Activated T-helper 2 cell treated with anti-CD3 and anti-CD28 coated beads, Interferon-gamma antibody, Interleukin-2, Interleukin-4, amounts not matched to agents 10 μg/mL and 5 μg/mL and 100 μg/mL, durations not matched to agents 14 hours and 24 hours and 36 hours (primary cell): ENCODE measurements at regions of chr12 and their contacts with region 1.

Region 1: DNA sequence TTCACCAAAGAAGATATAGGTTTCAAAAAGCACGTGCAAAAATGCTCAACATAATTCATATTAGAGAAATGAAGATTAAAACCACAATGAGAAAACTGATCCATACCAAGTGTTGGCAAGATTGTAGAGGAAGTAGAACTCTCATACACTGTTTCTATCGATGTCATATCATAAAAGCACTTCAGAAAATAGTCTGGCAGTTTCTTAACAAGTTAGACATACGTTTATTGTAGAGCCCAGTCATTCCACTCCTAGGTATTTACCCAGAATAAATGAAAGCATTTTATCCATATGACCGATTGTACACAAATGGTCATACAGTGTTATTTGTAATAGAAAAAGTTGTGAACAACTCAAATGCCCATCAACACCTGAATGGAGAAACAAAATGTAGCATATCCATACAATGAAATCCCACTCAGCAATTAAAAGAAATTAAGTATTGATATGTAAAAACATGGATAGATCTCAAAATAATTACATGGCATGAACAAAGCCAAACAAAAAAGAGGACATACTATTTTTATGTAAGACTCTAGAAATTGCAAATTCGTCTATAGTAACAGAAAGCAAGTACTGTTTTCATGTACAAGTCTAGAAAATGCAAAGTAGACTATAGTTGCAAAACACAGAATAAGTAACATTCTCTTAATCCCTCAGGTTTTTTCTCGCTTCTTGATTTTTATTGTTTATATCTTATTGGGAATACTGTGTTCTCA is 41.0 kb downstream of the USP15 start:
- DNase-seq: no peak
- H3K4me3 Mint-ChIP-seq: no peak overlapping the region
- H3K27ac Mint-ChIP-seq: no peak overlapping the region
- H3K4me1 Mint-ChIP-seq: peaks cover 37% of the 10 kb centered on the region
- H3K27me3 Mint-ChIP-seq: no peaks in the 10 kb centered on the region

Region 2: DNA sequence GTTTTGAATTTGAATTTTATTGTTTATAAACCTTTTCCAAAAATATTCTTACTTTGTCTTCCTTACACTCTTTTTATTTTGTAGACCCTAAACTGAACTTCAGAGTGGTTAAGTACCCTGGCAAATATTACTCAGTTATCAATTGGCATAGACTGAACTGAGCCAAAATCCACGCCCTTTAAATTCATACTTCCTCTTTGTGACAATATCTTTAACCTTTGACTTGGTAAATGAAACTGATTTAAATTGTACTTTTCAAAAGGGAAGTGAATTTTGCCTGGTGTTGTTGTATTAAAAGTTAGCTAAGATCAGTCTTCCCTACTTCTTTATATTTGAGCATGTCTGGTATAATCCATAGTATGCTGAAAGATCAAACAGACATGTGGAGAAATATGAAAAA is 225.4 kb before region 1 on chr12:
- intact Hi-C with region 1: no loop called
- DNase-seq: no peak
- H3K4me3 Mint-ChIP-seq: no peak overlapping the region
- H3K27ac Mint-ChIP-seq: no peak overlapping the region
- H3K4me1 Mint-ChIP-seq: no peaks in the 10 kb centered on the region
- H3K27me3 Mint-ChIP-seq: peaks cover 2% of the 10 kb centered on the region

Region 3: GRCh38 chr12:62181481-62181880 is 119.8 kb before region 1 on chr12:
- intact Hi-C with region 1: no loop called
- DNase-seq: no peak
- H3K4me3 Mint-ChIP-seq: no peak overlapping the region
- H3K27ac Mint-ChIP-seq: no peak overlapping the region
- H3K4me1 Mint-ChIP-seq: no peaks in the 10 kb centered on the region
- H3K27me3 Mint-ChIP-seq: peaks cover 19% of the 10 kb centered on the region

Region 4: DNA sequence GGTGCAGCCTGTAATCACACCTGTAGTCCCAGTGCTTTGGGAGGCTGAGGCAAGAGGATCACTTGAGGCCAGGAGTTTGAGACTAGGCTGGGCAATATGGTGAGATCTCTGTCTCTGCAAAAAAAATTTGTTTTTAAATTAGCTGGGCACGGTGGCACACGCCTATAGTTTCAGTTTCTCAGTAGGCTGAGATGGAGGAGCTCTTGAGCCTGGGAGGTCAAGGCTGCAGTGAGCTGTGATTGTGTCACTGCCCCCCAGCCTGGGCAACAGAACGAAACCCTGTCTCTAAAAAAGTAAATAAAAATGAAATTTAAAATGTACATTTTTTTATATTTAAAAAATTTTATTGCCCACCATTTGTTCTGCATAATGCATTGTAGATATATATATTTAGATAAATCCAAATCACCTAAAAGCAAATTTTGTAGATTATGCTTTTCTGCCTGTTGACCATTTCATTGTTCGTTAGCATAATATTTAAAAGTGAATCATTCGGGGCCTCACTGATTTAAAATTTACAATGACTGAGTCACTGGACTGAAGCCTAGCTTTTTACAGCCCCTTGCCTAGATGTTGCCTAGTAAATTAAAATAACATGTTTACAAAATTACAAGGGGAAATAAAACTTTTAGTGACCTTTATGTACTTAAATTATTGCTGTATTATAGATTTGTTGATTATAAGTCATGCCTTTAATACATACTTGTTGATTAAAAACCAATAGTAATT is 46.8 kb after region 1 on chr12:
- intact Hi-C with region 1: loop called (anchors 5 kb)
- DNase-seq: no peak
- H3K4me3 Mint-ChIP-seq: no peak overlapping the region
- H3K27ac Mint-ChIP-seq: no peak overlapping the region
- H3K4me1 Mint-ChIP-seq: peaks cover 9% of the 10 kb centered on the region
- H3K27me3 Mint-ChIP-seq: no peaks in the 10 kb centered on the region

Region 5: DNA sequence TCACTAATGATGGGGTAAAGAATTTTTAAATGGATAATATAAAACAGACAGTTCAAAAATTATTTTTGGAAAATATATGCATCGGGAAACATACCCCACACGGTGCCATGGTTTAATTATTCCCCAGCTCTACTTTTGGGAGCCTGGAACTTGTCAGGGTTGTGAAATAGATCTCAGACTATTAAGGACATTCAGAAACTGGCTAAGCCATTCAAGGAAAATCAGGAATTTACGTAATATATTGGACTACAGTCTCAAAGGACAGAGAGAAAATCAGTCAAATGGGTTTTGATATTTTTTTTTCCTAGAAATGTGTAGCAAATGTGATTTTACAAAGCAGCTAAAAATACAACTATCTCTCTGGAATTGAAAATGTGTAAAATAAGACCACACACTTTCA is 107.8 kb after region 1 on chr12:
- intact Hi-C with region 1: no loop called
- DNase-seq: no peak
- H3K4me3 Mint-ChIP-seq: no peak overlapping the region
- H3K27ac Mint-ChIP-seq: no peak overlapping the region
- H3K4me1 Mint-ChIP-seq: no peaks in the 10 kb centered on the region
- H3K27me3 Mint-ChIP-seq: no peaks in the 10 kb centered on the region